HEK293 (cell line): ENCODE measurements at regions of chr9 and their contacts with region 1.

Region 1: DNA sequence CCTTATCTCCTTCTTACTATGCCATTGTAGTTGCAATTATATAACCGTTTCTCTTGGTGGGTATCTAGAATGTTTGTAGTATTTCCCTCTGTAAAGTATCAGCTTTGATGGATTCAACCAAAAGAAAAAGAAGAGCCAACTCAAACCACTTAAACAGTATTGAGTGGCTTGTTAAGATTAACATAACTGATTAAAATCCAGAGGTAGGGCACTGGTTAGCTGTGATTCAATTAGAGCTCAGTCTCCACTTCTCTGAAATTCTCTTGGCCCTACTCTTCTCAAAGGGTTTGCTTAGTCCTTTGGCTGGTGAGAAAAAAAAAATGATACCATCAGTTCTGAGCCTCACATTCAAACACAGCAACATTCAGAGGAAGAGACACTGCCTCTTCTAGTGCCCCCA is 37.0 kb downstream of the TYRP1 start:
- H3K4me3 ChIP-seq: no peak overlapping the region
- H3K27ac ChIP-seq: no peak overlapping the region
- H3K4me1 ChIP-seq: no peaks in the 10 kb centered on the region
- CTCF ChIP-seq: no peak

Region 2: GRCh38 chr9:12684923-12685468 is 45.2 kb before region 1 on chr9:
- CTCF ChIA-PET with region 1: no interaction called
- POLR2A ChIA-PET with region 1: no interaction called
- H3K4me3 ChIP-seq: no peak overlapping the region
- H3K27ac ChIP-seq: no peak overlapping the region
- H3K4me1 ChIP-seq: no peaks in the 10 kb centered on the region
- CTCF ChIP-seq: no peak

Region 3: GRCh38 chr9:12695474-12695873 is 34.7 kb before region 1 on chr9:
- CTCF ChIA-PET with region 1: no interaction called
- POLR2A ChIA-PET with region 1: no interaction called
- H3K4me3 ChIP-seq: no peak overlapping the region
- H3K27ac ChIP-seq: no peak overlapping the region
- H3K4me1 ChIP-seq: peaks cover 19% of the 10 kb centered on the region
- CTCF ChIP-seq: no peak

Region 4: GRCh38 chr9:12884737-12885414 is 154.7 kb after region 1 on chr9:
- CTCF ChIA-PET with region 1: interaction called, 17 read pairs
- POLR2A ChIA-PET with region 1: no interaction called
- H3K4me3 ChIP-seq: no peak overlapping the region
- H3K27ac ChIP-seq: no peak overlapping the region
- H3K4me1 ChIP-seq: peaks cover 9% of the 10 kb centered on the region
- CTCF ChIP-seq: peak; percentile 85

Region 5: GRCh38 chr9:12906646-12907045 is 176.4 kb after region 1 on chr9:
- CTCF ChIA-PET with region 1: no interaction called
- POLR2A ChIA-PET with region 1: no interaction called
- H3K4me3 ChIP-seq: no peak overlapping the region
- H3K27ac ChIP-seq: no peak overlapping the region
- H3K4me1 ChIP-seq: no peaks in the 10 kb centered on the region
- CTCF ChIP-seq: no peak